ENCODE measurements at regions of chr7 and their contacts with region 1.

Region 1: DNA sequence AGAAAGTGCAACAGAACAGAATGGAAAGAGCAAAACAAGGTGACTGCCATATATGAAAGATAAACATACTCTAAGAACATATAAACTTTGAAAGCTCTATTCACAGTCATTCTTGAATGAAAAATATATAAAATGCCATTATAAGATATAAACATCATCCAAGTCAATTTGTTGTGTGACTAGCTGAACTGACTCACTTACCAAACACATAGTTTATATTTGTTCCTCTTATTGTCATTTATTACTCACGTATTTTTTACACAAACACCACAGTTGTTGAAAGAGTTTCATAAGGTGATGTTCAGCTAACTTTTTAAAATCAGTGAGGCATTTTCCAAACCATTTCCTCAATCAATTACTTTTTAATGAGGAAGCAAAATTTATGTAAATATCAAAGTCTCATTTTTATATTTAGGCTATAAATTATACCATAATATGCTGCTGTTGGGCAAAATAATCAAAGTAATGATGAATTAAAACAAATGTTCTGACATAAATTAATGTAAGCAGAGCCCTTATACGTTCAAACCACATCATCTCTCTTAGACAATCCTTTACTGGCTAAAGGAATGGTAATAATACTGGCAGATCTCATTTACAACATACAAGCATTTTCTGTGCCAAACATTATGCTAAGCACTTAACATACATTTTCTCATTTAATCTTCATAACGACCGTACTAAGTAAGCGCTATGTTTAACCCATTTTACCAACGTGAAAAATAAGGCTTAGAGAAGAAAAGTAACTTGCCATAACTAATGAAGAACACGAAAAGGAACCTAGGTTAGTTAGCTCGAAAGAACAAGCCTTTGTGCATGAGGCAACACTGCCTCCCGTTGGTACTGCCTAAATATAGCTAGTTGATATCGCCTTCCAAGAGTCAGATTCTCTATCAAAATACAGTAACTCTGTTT is 7.3 kb downstream of the LRRN3 start:
- DNase-seq: no peak
- H3K4me3 ChIP-seq: no peak overlapping the region
- H3K27ac ChIP-seq: peak overlapping the region in 1 of 2 experiments; percentile 68; a peak in 2 of 4 replicates
- H3K4me1 ChIP-seq: peaks cover 0 to 44% of the 10 kb centered on the region in 2 experiments; a peak in 3 of 4 replicates
- H3K27me3 ChIP-seq: no peaks in the 10 kb centered on the region
- CTCF ChIP-seq: peak; percentile 79
- EP300 ChIP-seq: no peak
- RAD21 ChIP-seq: peak; percentile 93

Region 2: DNA sequence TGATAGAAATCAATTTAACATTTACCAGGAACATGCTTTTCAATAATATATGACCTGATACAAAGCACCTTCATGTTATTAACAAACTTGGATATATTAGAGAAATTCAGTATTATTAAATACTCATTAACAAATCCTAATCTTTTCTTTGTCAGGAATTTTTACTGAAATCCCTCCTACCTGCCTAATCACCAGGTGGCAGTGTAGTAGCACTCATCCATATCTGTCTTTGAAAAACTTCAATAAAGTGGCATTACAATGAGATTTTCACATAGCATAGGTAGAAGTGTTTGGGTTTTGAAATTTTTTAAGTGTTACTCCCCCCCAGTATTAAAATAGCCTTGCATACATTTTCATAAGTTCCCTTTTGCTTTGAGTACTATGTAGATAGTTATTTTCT is 1253.9 kb before region 1 on chr7:
- CTCF ChIA-PET with region 1: interaction called, 20 read pairs
- POLR2A ChIA-PET with region 1: no interaction called
- DNase-seq: peak; percentile 32
- H3K4me3 ChIP-seq: no peak overlapping the region
- H3K27ac ChIP-seq: peak overlapping the region in 1 of 2 experiments; percentile 43; a peak in 2 of 4 replicates
- H3K4me1 ChIP-seq: no peaks in the 10 kb centered on the region; a peak in 1 of 4 replicates
- H3K27me3 ChIP-seq: no peaks in the 10 kb centered on the region
- CTCF ChIP-seq: peak; percentile 51
- EP300 ChIP-seq: no peak
- RAD21 ChIP-seq: peak; percentile 94

Region 3: GRCh38 chr7:110442381-110442837 is 655.9 kb before region 1 on chr7:
- CTCF ChIA-PET with region 1: interaction called, 10 read pairs
- POLR2A ChIA-PET with region 1: no interaction called
- DNase-seq: peak; percentile 81
- H3K4me3 ChIP-seq: no peak overlapping the region; a peak in 1 of 4 replicates
- H3K27ac ChIP-seq: peak overlapping the region in 1 of 2 experiments; percentile 86; a peak in 2 of 4 replicates
- H3K4me1 ChIP-seq: peaks cover 0 to 5% of the 10 kb centered on the region in 2 experiments; a peak in 2 of 4 replicates
- H3K27me3 ChIP-seq: no peaks in the 10 kb centered on the region
- CTCF ChIP-seq: peak; percentile 44
- EP300 ChIP-seq: peak; percentile 43 to 100; a peak in 2 of 4 replicates
- RAD21 ChIP-seq: peak; percentile 90

Region 4: DNA sequence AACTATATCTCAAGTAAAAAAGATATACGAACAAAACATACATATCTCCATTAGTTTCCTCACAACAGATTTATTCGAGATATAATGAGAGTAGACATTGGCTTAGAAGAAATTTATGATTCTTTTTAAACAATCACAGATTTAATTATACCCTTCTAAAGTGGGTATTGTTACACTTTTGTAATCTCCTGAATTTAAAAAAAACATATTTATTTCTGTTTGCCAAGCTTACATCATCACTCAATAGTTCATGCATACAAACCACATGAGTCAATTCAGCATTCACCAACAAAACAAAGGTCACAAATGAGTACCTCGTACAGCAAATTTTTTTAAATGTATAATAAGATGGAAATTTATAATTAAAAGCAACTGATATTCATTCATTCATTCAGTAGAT is 10.2 kb after region 1 on chr7:
- CTCF ChIA-PET with region 1: interaction called, 10 read pairs
- POLR2A ChIA-PET with region 1: no interaction called
- DNase-seq: no peak
- H3K4me3 ChIP-seq: no peak overlapping the region
- H3K27ac ChIP-seq: peak overlapping the region; percentile 0 to 91; a peak in 2 of 4 replicates
- H3K4me1 ChIP-seq: peaks cover 35 to 43% of the 10 kb centered on the region in 2 experiments
- H3K27me3 ChIP-seq: no peaks in the 10 kb centered on the region
- CTCF ChIP-seq: no peak
- EP300 ChIP-seq: no peak
- RAD21 ChIP-seq: no peak; the same call in 1 of the 2 replicates

Region 5: DNA sequence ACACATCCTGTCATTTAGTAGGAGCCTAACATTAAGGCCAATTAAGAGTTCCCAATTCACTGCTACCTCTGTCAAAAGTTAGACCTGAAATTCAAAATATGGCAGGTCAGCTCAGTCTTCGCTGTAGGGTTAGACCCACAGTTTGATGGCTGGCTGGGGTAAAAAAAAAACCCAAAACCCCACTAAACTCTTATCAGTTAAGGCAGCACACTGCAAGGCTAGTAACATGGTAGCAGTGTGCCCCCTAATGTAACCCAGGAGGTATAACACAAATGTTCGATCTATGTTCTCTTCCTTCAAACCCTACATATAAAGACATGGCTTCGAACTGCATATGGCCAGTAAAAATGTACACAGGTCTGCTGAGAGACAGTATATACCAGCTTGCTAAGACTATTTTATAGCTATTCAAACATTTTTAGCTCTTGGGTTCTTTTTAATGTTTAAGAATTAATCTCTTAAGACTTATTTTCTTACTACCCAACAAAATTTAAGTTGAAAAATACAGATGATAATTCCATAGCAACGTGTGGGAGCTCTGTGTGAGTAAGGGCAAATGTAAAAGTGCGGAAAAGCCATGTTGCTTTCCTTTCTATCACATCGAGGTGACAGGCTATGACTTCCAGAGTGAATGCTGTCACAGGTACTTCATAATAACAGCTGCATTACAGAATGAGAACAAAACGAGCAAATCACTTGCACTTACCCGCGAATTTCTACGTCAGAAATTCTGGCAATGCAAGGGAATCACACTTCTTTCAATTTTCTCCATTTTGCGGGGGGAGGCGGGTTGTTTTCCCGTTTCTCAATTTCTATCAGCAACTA is 632.4 kb after region 1 on chr7:
- CTCF ChIA-PET with region 1: interaction called, 35 read pairs
- POLR2A ChIA-PET with region 1: no interaction called
- DNase-seq: peak; percentile 71
- H3K4me3 ChIP-seq: no peak overlapping the region
- H3K27ac ChIP-seq: peak overlapping the region in 1 of 2 experiments; percentile 67; a peak in 2 of 4 replicates
- H3K4me1 ChIP-seq: peaks cover 0 to 24% of the 10 kb centered on the region in 2 experiments; a peak in 2 of 4 replicates
- H3K27me3 ChIP-seq: no peaks in the 10 kb centered on the region
- CTCF ChIP-seq: peak; percentile 78
- EP300 ChIP-seq: no peak
- RAD21 ChIP-seq: peak; percentile 91